ENCODE measurements at regions of chr18 and their contacts with region 1.

Region 1: DNA sequence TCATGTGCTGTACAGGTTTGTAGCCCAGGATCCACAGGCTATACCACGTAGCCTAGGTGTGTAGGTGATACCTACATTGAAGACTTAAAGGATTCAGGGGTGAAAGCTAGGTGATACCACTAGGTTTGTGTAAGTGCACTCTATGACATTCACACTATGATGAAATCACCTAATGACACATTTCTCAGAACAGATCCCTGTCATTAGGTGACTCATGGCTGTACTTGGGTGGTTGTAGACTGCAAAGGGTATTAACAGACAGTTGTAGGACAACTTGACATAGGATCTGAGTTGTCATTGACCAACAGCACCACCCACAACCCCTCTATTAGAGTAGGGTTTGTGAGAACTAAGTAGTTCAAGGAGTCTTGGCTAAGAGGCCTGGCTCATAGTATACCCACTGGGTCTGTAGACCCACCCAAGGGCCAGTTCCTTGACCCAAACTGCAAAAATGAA is 27.7 kb upstream of the SMCHD1 start:
- DNase-seq: peak; percentile 51
- ATAC-seq: peak; percentile 98
- H3K4me3 Mint-ChIP-seq: no peak overlapping the region
- H3K27ac Mint-ChIP-seq: peak overlapping the region; percentile 63
- H3K4me1 Mint-ChIP-seq: peaks cover 33% of the 10 kb centered on the region
- H3K27me3 Mint-ChIP-seq: no peaks in the 10 kb centered on the region

Region 2: DNA sequence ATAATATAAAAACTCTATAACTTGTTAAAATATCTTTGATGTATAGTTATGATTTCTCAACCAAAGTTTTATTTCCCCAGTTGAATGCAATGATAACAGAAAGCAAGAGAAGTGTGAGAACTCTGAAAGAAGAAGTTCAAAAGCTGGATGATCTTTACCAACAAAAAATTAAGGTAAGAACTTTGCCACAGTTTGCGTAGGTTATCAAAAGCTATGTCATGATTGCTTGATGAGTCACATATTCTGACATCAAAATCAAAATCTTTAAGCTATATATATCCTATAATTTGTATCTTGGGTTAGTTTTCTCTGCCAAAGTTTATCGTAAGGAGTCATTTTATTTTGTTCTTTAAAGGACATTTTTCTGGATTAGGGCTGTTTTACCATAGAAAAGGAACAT is 21.5 kb before region 1 on chr18:
- CTCF ChIA-PET with region 1: interaction called, 11 read pairs
- POLR2A ChIA-PET with region 1: interaction called, 11 read pairs
- intact Hi-C with region 1: loop called (anchors 1 kb)
- DNase-seq: no peak
- ATAC-seq: peak; percentile 54
- H3K4me3 Mint-ChIP-seq: peak overlapping the region; percentile 46
- H3K27ac Mint-ChIP-seq: peak overlapping the region; percentile 76
- H3K4me1 Mint-ChIP-seq: peaks cover 48% of the 10 kb centered on the region
- H3K27me3 Mint-ChIP-seq: no peaks in the 10 kb centered on the region

Measured in activated CD4-positive, alpha-beta T cell treated with anti-CD3 and anti-CD28 coated beads for 36 hours (primary cell).